PC-9 (cell line): ENCODE measurements at regions of chr19 and their contacts with region 1.

Region 1: GRCh38 chr19:15418588-15419412 is at the start of gene AKAP8L:
- DNase-seq: peak; percentile 99 to 100
- H3K4me3 ChIP-seq: peak within 1 kb of the TSS; percentile 87
- H3K27ac ChIP-seq: peak within 1 kb of the TSS; percentile 39
- H3K4me1 ChIP-seq: peaks cover 17% of the 10 kb centered on the region
- H3K27me3 ChIP-seq: no peaks in the 10 kb centered on the region
- CTCF ChIP-seq: peak; percentile 80
- total RNA-seq, gene AKAP8L: 49.9 and 62.4 TPM in 2 replicates

Region 2: DNA sequence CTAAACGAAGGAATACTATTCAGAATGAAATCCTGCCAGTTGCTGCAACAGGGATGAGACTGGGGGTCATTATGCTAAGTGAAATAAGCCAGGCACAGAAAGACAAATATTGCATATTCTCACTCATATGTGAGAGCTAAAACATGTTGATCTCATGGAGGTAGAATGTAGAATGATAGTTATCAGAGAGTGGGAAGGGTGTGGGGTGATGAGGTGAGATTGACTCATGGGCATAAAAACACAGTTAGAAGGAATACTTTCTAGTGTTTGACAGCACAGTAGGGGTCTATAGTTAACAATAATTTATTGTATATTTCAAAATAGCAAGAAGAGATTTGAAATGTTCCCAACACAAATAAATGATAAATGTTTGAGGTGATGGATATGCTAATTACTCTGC is 485.3 kb before region 1 on chr19:
- CTCF ChIA-PET with region 1: no interaction called
- POLR2A ChIA-PET with region 1: no interaction called
- intact Hi-C with region 1: no loop called
- DNase-seq: peak in 1 of 2 experiments; percentile 51
- H3K4me3 ChIP-seq: no peak overlapping the region
- H3K27ac ChIP-seq: no peak overlapping the region
- H3K4me1 ChIP-seq: no peaks in the 10 kb centered on the region
- H3K27me3 ChIP-seq: no peaks in the 10 kb centered on the region
- CTCF ChIP-seq: no peak

Region 3: DNA sequence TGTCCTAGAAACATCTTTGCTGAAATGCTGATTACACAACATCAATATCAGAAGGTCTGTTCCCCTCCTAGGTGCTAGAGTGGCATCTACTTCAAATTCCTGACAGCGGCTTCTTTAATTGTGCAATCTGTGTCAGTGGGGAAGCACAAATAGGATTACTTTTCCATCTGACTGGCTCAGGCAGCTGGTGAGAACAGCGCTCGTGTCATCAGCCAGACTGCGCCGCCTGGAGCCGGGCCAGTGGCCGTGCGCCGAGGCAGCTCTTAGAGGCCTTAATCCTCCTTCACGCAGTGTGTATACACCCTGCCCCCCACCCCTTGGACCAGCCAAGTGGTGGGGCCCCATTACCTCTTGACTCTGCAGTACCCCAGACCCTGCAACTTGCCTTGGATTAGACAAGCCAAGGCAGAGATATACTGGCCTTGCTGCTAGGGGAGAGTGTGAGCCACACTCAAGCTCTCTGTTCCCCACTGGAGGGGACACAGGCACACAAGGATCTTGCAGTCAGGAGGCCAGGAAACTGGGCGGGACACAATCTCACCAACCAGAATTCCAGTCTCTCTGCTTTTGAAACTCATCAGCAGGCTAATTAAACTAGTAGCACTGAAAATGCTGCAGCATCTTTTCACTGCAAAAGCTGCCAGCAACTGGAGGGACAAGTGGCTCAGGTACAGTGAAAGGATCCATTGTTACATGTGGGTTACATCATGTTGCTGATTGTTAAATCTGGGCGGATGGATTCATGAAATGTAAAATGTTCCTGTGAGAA is 137.7 kb before region 1 on chr19:
- CTCF ChIA-PET with region 1: no interaction called
- POLR2A ChIA-PET with region 1: no interaction called
- intact Hi-C with region 1: loop called (anchors 5 kb)
- DNase-seq: peak; percentile 63 to 77
- H3K4me3 ChIP-seq: no peak overlapping the region
- H3K27ac ChIP-seq: peak overlapping the region; percentile 87
- H3K4me1 ChIP-seq: peaks cover 54% of the 10 kb centered on the region
- H3K27me3 ChIP-seq: no peaks in the 10 kb centered on the region
- CTCF ChIP-seq: no peak

Region 4: DNA sequence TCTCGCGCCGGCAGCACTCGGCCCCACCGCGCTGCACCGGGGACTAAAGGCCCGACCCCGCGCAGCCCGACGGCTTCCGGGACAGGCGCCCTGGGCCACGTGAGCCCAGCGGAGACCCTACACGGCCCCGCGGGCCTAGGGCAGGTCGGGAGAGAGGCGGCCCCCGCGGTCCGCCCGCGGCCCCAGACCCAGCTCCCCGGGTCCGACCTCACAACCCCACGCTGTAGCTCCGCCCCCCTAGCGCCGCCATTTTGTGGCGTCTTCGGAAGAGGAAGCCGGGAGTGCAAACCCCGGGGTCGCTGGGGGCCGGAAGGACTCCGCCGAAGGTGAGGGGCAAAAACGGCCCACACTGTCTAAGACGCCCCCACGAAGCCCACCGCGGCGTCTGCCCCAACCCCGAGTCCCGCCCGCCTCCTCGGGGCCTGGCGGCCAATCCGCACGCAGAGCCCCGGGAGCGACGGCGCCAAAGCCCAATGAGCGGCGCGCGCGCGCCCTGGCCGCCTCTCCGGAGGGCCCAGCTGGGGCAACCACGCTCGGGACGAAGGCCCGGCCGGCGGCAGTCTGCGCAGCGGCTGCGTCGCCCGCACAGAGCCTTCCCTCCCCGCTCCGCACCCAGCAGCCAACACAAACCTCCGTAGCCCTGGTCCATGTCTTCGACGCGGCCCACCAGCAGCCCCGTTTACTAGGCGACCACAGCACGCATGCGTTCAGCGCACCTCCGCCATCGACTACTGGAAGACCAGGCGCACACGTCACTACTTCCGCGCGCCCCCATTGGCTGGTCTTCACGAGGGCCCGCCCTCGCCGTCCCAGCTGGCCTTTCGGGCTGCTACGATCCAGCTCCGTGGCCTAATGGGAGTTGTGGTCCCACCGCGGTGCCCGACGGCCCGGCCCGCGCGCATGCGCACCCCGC is 39.5 kb before region 1 on chr19 and contains the start of gene AKAP8:
- CTCF ChIA-PET with region 1: interaction called, 6 read pairs
- POLR2A ChIA-PET with region 1: interaction called, 19 read pairs
- intact Hi-C with region 1: loop called (anchors 2 kb)
- DNase-seq: peak; percentile 97 to 98
- H3K4me3 ChIP-seq: peak within 1 kb of the TSS; percentile 78
- H3K27ac ChIP-seq: peak within 1 kb of the TSS; percentile 87
- H3K4me1 ChIP-seq: peaks cover 22% of the 10 kb centered on the region
- H3K27me3 ChIP-seq: no peaks in the 10 kb centered on the region
- CTCF ChIP-seq: no peak
- total RNA-seq, gene AKAP8: 39.5 and 43.4 TPM in 2 replicates

Region 5: GRCh38 chr19:15396436-15396835 is 22.4 kb before region 1 on chr19:
- CTCF ChIA-PET with region 1: no interaction called
- POLR2A ChIA-PET with region 1: interaction called, 26 read pairs
- intact Hi-C with region 1: no loop called
- DNase-seq: no peak
- H3K4me3 ChIP-seq: no peak overlapping the region
- H3K27ac ChIP-seq: no peak overlapping the region
- H3K4me1 ChIP-seq: no peaks in the 10 kb centered on the region
- H3K27me3 ChIP-seq: no peaks in the 10 kb centered on the region
- CTCF ChIP-seq: no peak